Left cardiac atrium (tissue), 4 donors: ENCODE measurements at regions of chr3 and their contacts with region 1.

Region 1: DNA sequence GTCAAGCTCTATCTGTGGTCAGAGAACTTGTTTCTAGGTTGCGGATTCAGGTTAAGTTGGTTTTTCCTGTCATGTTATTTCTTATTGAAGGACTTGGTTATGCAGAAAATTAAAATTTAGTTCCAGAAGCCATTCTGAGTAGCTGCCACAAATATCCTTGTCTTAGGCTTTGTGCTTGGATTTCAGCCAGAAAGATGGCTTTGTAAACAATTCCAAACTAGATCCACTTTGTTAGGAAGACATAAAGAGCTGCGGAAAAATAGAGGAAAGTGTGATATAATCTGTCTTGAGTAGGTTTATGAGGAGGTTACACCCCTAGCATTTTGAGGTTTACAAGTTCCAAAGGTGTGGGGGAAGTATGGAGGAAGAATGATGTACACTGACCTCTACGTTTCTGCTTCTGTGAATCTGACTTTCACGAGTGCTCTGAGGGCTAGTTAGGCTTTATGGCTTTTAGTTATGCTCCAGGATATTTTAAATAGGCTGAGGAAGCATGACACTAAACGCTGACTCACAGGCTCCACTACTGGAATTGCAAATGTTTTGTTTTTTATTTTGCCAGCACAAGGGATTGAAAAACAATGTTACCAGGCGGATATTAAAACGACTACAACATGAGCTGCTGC is 46.3 kb upstream of the UTS2B start:
- DNase-seq: no peak
- ATAC-seq: peak; percentile 41 to 64

Region 2: DNA sequence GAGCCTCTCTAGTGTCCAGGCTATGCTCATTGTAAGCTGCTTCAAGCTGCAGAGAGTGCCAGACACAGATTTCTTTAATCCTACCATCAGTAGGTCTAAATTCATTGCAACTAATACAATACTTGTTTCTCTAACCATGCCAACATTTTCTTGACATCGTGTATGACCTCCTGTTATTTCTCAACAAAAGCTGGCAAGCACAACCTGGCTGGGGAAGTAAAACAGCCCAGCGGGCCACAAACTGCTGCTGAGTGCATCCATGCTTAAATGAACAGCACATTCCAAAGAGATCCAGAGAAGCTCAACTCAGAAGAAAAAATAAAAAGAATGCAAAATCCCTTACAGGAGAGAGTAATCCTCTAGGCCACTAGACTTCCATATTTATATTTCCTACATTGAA is 550.6 kb before region 1 on chr3:
- intact Hi-C with region 1: no loop called
- DNase-seq: no peak
- ATAC-seq: no peak

Region 3: DNA sequence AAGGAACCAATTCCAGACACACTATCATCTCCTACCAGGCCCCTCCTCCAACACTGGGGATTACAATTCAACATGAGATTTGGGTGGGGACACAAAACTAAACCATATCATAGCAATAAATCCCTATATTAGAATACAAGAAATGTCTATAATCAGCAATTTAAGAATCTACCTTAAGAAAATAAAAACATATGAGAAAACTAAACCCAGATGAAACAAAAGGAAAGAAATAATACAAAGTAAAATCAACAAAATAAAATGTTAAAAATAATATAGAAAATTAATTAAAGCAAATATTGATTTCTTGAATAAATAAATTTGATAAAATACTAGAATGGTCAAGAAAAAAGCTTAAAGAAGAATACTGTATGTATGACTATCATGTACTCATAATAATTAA is 183.7 kb before region 1 on chr3:
- intact Hi-C with region 1: no loop called
- DNase-seq: no peak
- ATAC-seq: no peak

Region 4: DNA sequence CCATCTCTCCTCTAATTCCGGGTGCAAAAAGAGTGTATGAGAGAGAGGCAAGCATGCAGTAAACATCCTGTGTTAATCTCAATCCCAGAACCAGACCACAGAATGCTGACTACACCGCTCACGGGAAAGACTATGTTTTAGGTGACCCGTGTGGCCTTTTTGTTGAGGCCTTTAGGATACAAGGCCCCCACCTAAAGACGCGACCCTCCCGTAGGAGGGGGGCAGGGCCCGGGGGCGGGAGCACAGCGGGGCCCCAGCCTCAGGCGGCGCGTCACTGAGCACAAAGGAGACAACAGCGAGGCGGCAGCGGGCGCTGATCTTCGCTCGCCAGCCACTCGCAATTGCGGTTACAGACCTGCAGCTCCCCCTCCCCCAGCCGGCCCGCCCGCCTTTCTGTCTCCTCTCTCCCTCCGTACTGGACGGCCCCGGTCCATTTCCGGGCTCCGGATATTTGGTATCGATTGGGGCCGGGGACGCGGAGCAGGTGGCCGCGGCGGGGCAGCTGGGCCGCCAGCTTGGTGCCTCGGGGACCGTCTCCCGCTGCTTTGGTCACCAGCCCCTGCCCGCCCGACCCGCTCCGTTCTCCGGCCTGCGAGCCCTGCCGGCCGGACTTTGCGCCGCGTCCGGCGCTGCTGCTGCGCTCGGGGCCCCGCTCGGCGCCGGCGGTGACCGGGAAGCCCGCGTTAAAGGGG is 47.5 kb before region 1 on chr3 and contains the start of gene CCDC50:
- intact Hi-C with region 1: loop called in 1 of 2 experiments (anchors 5 kb)
- DNase-seq: peak; percentile 90
- ATAC-seq: peak; percentile 90 to 92
- total RNA-seq, gene CCDC50: 53.1 to 69.0 TPM